GM10248 (cell line): ENCODE measurements at regions of chr5 and their contacts with region 1.

Region 1: DNA sequence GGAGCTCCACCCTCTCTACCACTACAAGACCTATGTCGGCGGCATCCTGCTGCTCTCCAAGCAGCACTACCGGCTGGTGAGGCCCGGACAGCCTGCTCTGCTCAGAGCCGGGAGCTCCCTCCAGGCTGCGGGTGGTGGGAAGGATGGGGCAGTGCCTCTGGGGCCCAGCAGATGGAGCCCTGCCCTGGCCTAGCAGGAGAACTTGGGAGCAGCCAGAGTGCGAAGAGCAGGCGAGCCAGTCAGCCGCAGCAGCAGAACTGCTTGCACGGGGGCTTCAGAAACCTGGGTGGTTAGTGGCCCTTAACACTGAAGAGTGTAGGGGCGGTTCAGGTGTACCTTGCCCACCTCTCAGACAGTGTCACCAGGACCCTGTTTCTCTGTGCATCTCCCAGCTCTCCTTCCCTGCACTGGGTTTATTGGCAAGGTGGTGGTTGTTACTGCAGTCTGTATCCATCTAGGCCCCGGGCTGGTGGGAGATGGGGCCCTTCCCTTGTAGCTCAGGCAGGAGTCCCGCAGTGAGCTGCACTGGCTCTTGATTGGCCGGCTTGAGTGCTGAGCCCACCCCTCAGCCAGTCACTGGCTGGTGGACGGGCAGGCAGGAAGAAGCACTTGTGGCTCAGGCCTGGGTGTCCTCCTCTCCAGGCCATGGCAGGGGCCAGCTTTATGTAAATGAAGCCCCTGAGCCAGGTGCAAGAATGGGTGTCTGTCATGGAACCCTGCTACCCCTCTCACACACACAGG is 7.7 kb downstream of the B4GALT7 start:
- DNase-seq: peak; percentile 79
- CTCF ChIP-seq: peak; percentile 87

Region 2: DNA sequence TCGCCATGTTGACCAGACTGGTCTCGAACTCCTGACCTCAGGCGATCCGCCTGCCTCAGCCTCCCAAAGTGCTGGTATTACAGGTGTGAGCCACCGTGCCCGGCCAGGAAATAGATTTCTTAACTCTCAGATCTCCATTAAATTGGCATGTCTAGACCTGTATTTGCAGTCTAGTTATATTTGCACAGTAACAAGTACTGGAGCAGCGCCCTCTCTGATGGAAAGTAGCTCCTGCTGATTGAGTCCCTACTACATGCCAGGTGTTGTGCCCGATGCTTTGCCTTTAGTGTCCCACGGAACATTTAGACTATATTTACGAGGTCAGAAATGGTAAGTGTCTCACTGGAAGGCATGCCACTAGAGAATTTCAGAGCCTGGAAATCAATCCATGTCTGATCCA is 31.5 kb before region 1 on chr5:
- CTCF ChIA-PET with region 1: no interaction called
- POLR2A ChIA-PET with region 1: no interaction called
- DNase-seq: no peak
- CTCF ChIP-seq: no peak

Region 3: DNA sequence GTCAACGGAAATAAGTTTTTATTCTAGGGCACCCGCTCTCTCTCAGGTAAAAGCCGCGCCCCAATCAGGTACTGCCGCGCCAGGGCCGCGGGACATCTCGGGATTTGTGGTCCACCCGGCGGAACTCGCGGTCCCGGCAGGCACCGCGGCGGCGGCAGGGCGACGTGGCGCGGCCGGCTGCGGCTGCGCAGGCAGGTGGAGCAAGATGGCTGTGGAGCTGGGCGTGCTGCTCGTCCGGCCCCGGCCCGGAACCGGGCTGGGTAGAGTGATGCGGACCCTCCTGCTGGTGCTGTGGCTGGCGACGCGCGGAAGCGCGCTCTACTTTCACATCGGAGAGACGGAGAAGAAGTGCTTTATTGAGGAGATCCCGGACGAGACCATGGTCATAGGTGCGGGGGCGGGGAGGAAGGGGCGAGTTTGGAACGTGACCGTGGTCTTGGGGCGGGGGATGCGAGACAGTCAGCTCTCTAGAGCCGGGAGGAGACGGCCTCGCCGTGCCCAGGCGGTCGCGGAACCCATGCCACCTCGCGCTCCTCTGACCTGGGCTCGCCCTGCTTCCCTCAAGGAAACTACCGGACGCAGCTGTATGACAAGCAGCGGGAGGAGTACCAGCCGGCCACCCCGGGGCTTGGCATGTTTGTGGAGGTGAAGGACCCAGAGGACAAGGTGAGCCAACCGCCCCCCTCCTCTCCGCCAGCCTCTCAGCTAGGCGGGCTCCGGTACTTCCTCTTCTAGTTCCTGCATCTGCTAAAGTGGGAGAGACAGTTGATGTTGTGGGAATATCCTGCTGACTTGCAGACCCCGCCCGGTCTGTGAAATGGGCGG is 15.4 kb before region 1 on chr5 and contains the start of gene TMED9:
- CTCF ChIA-PET with region 1: interaction called, 13 read pairs
- POLR2A ChIA-PET with region 1: interaction called, 3 read pairs
- DNase-seq: peak; percentile 94
- CTCF ChIP-seq: no peak